ENCODE measurements at regions of chr2 and their contacts with region 1.

Region 1: DNA sequence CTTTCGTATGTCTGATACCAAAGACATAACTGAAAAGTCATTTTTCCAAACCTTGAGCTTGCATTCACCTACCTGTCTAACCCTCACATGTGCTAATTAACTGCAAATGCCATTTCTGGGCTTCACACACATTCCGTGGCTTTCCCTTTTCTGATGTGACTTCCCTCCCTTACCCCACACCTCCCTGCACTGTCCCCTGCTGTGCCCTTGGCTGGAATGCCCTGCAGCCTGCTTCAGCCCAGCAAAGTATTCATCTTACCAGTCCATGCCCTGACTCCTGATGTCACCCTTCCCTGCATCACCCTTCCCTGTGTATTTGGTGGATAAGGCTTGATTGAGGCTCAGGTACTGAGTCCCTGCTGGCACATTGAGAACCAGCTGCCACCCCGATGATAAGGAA is 12.2 kb downstream of the RETSAT start:
- DNase-seq: no peak
- H3K4me3 ChIP-seq: no peak overlapping the region
- H3K27ac ChIP-seq: no peak overlapping the region
- H3K4me1 ChIP-seq: no peaks in the 10 kb centered on the region
- H3K27me3 ChIP-seq: no peaks in the 10 kb centered on the region
- CTCF ChIP-seq: no peak
- POLR2A ChIP-seq: no peak

Region 2: GRCh38 chr2:84653300-84653699 is 688.9 kb before region 1 on chr2:
- intact Hi-C with region 1: no loop called
- DNase-seq: no peak
- H3K4me3 ChIP-seq: no peak overlapping the region
- H3K27ac ChIP-seq: no peak overlapping the region
- H3K4me1 ChIP-seq: no peaks in the 10 kb centered on the region
- H3K27me3 ChIP-seq: no peaks in the 10 kb centered on the region
- CTCF ChIP-seq: no peak
- POLR2A ChIP-seq: no peak

Region 3: GRCh38 chr2:85278361-85278760 is 63.8 kb before region 1 on chr2:
- intact Hi-C with region 1: no loop called
- DNase-seq: no peak
- H3K4me3 ChIP-seq: no peak overlapping the region
- H3K27ac ChIP-seq: peak overlapping the region in 1 of 5 donors; percentile 82
- H3K4me1 ChIP-seq: no peaks in the 10 kb centered on the region
- H3K27me3 ChIP-seq: no peaks in the 10 kb centered on the region
- CTCF ChIP-seq: no peak
- POLR2A ChIP-seq: no peak

Region 4: DNA sequence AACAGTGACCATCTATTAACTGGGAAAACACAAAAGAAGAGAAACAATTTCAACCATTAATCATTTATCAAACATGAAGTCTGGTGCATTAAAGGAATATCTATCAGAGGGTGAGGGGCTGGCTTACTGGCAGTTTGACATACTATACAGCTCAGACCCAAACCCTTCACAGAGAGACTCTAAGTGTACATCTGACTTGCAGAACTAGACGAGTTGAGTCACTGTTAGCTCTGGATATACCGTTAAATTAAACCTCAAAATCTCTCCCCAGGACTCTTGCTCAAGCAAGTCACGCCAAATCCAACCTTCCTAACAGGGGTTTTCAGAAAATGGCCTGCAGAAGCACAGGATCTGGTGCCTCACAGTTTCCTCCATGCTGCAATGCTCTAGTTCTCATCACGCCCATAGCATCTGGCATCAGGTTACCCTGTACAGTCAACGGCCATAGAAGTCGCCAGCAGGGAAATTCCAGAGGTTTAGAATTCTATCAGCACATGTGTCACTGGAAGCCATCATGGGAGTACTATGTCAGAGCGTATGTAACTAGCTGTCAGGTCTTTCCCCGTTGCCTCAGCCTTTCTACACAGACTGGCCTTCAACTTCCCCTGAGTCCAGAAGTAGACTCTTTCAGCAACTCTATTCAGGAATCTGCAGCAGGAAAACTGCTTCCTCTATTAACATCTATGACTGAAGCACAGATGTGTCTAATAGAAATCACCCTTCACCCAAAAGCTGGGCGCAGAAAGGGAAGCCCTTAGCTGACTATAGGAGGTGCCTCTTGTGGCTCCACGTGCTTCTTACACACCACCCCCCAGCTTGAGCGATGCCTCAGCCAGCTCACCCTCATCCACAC is 23.7 kb before region 1 on chr2:
- intact Hi-C with region 1: loop called in 1 of 2 experiments (anchors 2 kb)
- DNase-seq: peak in 1 of 7 donors; percentile 57
- H3K4me3 ChIP-seq: no peak overlapping the region
- H3K27ac ChIP-seq: peak overlapping the region in 2 of 5 donors; percentile 4 to 37
- H3K4me1 ChIP-seq: peaks cover 19 to 59% of the 10 kb centered on the region in 2 donors
- H3K27me3 ChIP-seq: no peaks in the 10 kb centered on the region
- CTCF ChIP-seq: no peak
- POLR2A ChIP-seq: no peak

Region 5: DNA sequence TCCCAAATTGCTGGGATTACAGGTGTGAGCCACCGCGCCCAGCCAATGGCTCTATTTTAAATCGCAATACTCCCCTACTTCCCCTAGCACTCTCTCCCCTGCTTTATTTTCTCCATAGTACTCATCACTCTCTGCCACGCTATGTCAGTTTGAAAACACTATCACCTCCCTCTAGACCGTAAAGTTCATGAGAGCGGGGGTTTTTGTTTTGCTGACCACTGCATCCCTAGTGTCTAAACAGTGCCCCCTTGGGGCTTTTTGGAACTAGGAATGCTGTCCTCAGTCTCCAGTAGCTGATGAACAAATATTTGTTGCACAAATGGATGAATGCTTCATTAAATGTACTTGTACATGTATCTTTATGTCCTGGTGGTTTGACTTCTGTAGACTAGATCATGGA is 455.8 kb after region 1 on chr2:
- intact Hi-C with region 1: no loop called
- DNase-seq: peak in 1 of 7 donors; percentile 54
- H3K4me3 ChIP-seq: no peak overlapping the region
- H3K27ac ChIP-seq: no peak overlapping the region
- H3K4me1 ChIP-seq: peaks cover 2 to 6% of the 10 kb centered on the region in 2 donors
- H3K27me3 ChIP-seq: no peaks in the 10 kb centered on the region
- CTCF ChIP-seq: peak; percentile 22 to 63 (median 50)
- POLR2A ChIP-seq: no peak